ACHN (cell line): ENCODE measurements at regions of chr1 and their contacts with region 1.

Region 1: DNA sequence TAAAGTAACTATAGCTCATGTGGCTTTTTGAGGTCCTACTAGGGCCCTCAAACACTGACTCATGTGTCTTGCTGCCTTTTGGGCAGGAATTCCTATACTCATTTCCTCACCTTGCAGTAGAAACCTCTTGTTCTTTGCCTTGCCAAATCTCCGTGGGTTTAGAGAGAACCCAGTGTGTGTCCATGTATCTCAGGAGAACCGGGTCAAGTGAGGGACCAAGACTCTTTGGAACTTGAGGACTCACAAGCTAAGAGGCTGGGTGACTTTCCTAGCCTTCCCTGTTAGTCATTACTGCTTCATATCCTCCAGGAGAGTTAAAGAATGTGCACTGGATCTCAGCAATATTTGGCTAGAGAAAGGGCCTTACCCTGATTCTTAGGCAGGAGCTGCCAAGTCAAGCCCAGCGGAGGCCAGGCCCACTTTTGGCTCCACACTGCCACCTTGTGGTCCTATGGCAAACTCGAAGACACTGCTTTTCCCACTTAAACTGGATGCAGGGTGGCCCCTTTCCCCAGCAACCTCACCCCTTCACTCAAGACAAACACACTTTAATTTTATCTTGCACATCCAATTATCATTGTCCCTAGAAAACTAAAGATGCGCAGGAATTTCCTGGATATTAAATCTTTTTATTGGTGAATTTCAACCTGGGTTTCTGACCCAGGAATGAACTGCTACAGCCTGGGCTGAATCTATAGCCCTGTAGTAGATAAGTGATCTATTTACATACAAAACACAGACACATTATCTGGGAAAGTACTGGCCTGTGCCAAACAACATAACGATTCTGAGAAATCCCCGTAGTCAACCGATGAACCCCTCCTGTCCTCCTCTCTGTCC is 10.6 kb downstream of the AVPR1B start:
- DNase-seq: peak; percentile 80

Region 2: GRCh38 chr1:205812878-205813754 is 293.4 kb before region 1 on chr1 and contains the start of gene SLC41A1:
- in situ Hi-C with region 1: no loop called
- DNase-seq: peak; percentile 93

Region 3: DNA sequence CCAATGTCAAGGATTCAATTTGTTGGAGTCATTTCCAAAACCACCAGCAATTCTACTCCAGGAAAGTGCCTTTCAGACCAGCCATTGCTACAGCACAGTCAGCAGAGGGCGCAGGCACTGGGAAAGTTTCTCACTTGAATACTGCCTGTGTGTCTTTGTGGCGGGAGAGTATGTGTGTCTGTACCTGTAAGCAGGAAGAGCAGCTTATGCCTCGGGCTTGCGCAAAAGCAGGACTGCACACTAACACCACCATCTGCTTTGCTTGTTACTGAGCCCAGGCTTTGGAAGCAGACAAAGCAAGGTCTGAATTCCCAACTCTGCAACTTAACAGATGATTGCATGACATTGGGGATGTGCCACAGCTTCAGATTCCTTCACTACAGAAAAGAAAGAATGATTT is 75.8 kb before region 1 on chr1:
- in situ Hi-C with region 1: loop called (anchors 10 kb)
- DNase-seq: peak; percentile 87

Region 4: DNA sequence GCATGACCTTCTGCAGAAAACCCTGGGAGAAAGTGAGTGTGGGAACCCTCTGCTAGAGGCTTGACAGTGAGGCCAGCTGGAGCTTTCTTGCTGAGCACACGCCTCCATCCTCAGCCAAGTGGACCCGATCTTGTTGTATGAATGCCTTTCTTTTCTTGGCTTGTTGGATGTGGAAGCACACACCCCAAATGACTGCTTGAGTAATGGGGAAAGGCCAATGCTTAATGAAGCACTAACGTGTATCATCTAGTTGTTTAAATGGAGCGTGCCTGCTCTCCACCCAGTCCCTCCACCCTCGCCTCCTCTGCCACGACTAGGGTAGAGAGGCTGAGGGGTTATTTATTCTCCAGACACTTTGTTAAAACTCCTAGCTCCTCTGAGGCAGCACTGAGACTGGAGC is 309.4 kb after region 1 on chr1:
- in situ Hi-C with region 1: no loop called
- DNase-seq: no peak